IMR-90 (cell line): ENCODE measurements at regions of chr18 and their contacts with region 1.

Region 1: GRCh38 chr18:69226971-69227370 is 173.7 kb upstream of the DOK6 start:
- DNase-seq: no peak
- ATAC-seq: no peak
- H3K4me3 ChIP-seq: no peak overlapping the region
- H3K27ac ChIP-seq: no peak overlapping the region
- H3K4me1 ChIP-seq: no peaks in the 10 kb centered on the region
- H3K27me3 ChIP-seq: no peaks in the 10 kb centered on the region
- CTCF ChIP-seq: no peak
- POLR2A ChIP-seq: no peak
- RAD21 ChIP-seq: no peak

Region 2: DNA sequence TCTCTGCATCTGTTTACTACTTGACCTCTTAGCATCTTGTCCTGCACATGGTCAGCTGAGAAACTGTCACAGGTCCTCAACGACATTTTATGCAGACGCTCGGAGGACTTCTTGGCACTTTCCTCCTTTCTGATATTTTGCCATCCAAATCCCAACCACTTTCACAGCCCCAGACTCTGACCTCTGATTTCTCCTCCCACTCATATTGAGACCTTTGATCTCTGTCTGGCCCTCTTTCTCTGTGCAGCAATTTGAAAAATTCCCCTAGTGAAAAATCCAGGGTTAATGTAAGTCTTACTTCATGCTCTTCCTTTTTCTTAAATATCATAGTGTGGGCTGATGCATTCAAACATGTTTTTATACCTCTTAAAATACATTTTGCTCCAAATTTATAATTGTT is 155.3 kb before region 1 on chr18:
- CTCF ChIA-PET with region 1: no interaction called
- POLR2A ChIA-PET with region 1: no interaction called
- dilution Hi-C with region 1: no loop called
- in situ Hi-C with region 1: no loop called
- intact Hi-C with region 1: no loop called
- DNase-seq: no peak
- ATAC-seq: no peak
- H3K4me3 ChIP-seq: no peak overlapping the region
- H3K27ac ChIP-seq: no peak overlapping the region
- H3K4me1 ChIP-seq: no peaks in the 10 kb centered on the region
- H3K27me3 ChIP-seq: no peaks in the 10 kb centered on the region
- CTCF ChIP-seq: no peak
- POLR2A ChIP-seq: no peak
- RAD21 ChIP-seq: no peak

Region 3: DNA sequence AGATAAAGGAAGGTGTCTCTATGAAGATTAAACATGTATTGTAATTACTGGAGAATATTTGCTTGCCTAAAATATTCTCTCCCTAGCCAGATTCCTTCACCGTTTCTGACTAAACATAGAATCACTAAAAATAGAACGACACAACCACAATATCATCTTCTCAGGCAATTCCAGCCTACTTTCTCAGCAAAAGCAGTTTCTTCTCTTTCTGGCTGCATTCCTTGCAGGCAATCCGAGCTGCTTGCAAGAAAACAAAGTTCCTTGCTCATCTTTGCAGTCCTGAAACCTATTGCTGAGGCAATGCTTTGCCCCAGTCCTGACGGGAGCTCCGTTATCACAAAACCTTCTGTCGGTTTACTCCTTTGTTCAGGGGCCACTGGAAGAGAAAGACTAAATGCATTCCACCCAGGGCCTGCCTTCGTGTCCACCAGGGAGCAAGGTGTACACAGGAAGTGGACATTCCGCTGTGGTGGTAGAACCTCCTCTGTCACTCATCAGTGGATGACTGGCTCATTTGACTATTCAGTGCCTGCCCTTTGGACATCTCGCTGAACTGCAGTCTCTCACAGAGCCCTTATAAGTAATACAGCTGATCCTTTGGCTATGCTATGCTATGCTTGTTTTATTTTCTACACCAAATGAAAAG is 65.5 kb before region 1 on chr18:
- CTCF ChIA-PET with region 1: no interaction called
- POLR2A ChIA-PET with region 1: no interaction called
- dilution Hi-C with region 1: no loop called
- in situ Hi-C with region 1: no loop called
- intact Hi-C with region 1: loop called (anchors 5 kb)
- DNase-seq: peak; percentile 63
- ATAC-seq: peak; percentile 67
- H3K4me3 ChIP-seq: peak overlapping the region; percentile 2; the same call in 1 of the 2 replicates
- H3K27ac ChIP-seq: no peak overlapping the region
- H3K4me1 ChIP-seq: peaks cover 2% of the 10 kb centered on the region; the same call in 1 of the 2 replicates
- H3K27me3 ChIP-seq: no peaks in the 10 kb centered on the region
- CTCF ChIP-seq: no peak
- POLR2A ChIP-seq: no peak
- RAD21 ChIP-seq: no peak

Region 4: DNA sequence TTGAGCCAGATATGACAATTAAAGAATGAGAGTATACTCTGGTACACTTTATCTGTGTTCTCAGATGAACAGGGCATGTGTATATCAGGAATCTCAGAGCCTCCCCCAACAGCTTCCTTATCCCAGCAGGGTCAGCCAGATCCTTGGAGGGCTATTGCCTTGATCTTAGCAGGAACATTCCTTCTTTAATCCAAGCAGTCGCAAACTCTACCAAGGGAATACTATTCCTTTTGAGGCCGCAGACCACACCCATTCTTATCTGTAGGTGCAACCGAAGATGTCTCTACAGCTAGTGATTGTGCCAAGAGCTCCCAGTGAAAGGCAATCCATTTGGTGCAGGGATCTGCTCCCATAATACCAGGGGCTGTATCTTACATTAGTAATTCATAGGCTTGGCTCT is 55.4 kb after region 1 on chr18:
- CTCF ChIA-PET with region 1: no interaction called
- POLR2A ChIA-PET with region 1: no interaction called
- dilution Hi-C with region 1: no loop called
- in situ Hi-C with region 1: no loop called
- intact Hi-C with region 1: loop called (anchors 5 kb)
- DNase-seq: no peak
- ATAC-seq: no peak
- H3K4me3 ChIP-seq: no peak overlapping the region
- H3K27ac ChIP-seq: no peak overlapping the region
- H3K4me1 ChIP-seq: no peaks in the 10 kb centered on the region
- H3K27me3 ChIP-seq: no peaks in the 10 kb centered on the region
- CTCF ChIP-seq: no peak
- POLR2A ChIP-seq: no peak
- RAD21 ChIP-seq: no peak

Region 5: DNA sequence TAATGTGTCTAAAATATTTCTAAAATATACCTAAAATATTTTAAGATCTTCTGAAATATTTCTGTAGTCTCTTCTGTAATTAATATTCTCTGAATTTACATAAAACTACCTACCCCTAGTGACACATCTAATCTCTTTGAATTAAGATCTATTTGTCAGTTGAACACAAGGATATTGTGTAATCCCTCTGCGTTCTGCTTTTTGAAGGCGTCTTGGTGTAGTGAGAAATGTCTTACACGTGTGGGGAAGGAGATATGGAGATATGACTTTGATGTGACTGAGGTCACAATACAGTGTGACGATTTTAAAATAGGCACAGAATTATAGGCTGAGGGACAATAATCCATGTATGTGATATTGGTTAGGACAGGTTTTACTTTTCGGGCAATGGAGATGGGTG is 253.5 kb after region 1 on chr18:
- CTCF ChIA-PET with region 1: no interaction called
- POLR2A ChIA-PET with region 1: no interaction called
- dilution Hi-C with region 1: no loop called
- in situ Hi-C with region 1: no loop called
- intact Hi-C with region 1: no loop called
- DNase-seq: no peak
- ATAC-seq: no peak
- H3K4me3 ChIP-seq: no peak overlapping the region
- H3K27ac ChIP-seq: no peak overlapping the region
- H3K4me1 ChIP-seq: no peaks in the 10 kb centered on the region
- H3K27me3 ChIP-seq: no peaks in the 10 kb centered on the region
- CTCF ChIP-seq: no peak
- POLR2A ChIP-seq: no peak
- RAD21 ChIP-seq: no peak